RWPE1 (cell line): ENCODE measurements at regions of chr20 and their contacts with region 1.

Region 1: DNA sequence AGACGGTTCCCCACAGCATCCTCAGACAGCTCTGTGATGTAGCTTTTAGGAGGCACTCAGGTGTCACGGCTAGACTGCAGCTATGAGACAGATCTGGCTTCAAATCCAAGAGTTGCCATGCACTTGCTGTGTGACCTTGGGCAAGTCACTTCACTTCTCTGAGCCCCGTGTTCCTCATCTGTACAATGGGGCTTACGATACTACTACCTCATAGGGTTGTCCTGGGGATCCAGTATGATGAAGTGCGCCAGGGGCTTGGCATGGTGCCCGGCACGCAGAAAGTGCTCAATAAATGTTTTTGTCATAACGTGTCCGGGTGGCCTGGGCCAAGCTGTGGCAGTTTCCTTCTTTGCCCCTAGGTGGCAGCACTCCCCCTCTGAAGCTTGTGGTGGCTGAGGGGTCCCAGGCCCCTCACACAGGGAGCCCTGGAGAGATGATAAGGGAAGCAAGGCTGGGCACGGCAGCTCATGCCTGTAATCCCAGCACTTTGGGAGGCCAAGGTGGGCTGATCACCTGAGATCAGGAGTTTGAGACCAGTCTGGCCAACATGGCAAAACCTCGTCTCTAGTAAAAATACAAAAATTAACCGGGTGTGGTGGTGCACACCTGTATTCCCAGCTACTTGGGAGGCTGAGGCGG is 19.1 kb upstream of the CHMP4B start:
- DNase-seq: peak; percentile 75
- H3K27ac ChIP-seq: peak overlapping the region; percentile 96
- CTCF ChIP-seq: peak; percentile 90

Region 2: GRCh38 chr20:33005132-33005566 is 786.9 kb before region 1 on chr20:
- CTCF ChIA-PET with region 1: no interaction called
- POLR2A ChIA-PET with region 1: no interaction called
- DNase-seq: no peak
- H3K27ac ChIP-seq: no peak overlapping the region
- CTCF ChIP-seq: no peak

Region 3: DNA sequence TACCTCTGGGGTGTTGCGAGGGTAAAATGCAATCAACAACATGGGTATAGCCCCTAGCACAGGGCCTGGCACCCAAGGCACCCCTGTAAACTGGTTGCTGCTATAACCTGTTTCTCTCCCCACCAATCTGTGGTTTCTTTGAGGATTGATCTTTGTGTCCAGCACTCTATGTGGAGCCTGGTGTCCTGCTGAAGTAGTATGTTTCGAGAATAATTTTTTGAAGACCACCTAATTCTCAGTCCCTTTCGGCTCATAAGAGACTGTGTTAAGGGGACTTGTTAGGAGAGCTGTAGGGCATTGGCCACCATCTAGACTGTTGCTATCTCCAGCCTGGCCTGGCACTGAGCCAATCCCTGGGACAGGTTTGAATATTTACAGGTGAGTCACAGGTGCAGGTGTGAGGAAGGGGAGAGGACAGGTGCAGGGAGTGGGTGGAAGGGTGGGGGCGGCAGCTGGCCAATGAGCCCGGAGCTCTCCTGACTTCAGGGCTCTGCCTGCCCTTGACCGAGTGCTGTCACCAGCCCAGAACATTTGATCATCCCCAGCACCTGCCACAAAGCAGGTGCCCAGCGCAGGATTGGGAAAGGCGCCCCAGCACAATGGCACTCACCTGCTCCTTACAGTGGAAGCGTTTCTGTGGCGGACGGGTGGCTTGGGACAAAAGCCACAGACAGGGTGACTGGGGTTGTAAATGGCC is 138.0 kb before region 1 on chr20:
- CTCF ChIA-PET with region 1: no interaction called
- POLR2A ChIA-PET with region 1: no interaction called
- DNase-seq: peak; percentile 64
- H3K27ac ChIP-seq: no peak overlapping the region
- CTCF ChIP-seq: no peak

Region 4: GRCh38 chr20:33753763-33754162 is 38.3 kb before region 1 on chr20:
- CTCF ChIA-PET with region 1: interaction called, 12 read pairs
- POLR2A ChIA-PET with region 1: interaction called, 6 read pairs
- DNase-seq: no peak
- H3K27ac ChIP-seq: no peak overlapping the region
- CTCF ChIP-seq: no peak

Region 5: DNA sequence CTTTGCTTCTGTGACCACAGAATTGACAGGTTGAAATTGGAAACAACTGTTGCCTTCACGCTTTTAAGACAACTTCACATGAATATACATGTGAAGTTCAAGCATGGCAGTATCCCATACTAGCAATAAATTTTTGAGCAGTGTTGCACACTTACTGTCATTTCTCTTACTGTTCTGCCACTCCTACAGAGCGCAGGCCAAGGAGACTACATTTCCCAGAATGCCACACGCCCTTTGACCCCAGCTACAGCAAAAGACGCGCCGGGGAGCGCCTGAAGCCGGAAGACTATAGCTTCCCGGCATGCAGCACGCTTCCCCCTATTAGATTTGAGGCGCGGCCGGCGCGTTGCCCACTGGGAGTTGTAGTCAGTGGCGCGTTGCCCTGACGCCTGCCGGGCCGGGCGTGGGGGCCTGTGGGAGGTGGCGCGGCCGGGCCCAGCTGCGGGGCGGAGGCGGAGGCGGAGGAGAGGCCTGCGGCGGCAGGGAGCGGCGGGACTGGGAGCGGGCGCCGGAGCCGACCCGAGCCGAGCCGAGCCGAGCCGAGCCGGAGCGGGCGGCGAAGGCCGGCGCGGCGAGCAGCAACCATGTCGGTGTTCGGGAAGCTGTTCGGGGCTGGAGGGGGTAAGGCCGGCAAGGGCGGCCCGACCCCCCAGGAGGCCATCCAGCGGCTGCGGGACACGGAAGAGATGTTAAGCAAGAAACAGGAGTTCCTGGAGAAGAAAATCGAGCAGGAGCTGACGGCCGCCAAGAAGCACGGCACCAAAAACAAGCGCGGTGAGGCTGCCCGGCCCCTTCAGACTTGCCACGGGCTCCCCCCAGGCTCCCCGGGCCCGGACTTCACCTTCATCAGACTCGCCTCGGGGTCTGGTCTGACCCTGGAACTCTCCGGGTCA is 19.1 kb after region 1 on chr20 and contains the start of gene CHMP4B:
- CTCF ChIA-PET with region 1: interaction called, 15 read pairs
- POLR2A ChIA-PET with region 1: interaction called, 5 read pairs
- DNase-seq: peak; percentile 100
- H3K27ac ChIP-seq: peak within 1 kb of the TSS; percentile 93
- CTCF ChIP-seq: no peak